CD8-positive, alpha-beta T cell (primary cell): ENCODE measurements at regions of chr12 and their contacts with region 1.

Region 1: DNA sequence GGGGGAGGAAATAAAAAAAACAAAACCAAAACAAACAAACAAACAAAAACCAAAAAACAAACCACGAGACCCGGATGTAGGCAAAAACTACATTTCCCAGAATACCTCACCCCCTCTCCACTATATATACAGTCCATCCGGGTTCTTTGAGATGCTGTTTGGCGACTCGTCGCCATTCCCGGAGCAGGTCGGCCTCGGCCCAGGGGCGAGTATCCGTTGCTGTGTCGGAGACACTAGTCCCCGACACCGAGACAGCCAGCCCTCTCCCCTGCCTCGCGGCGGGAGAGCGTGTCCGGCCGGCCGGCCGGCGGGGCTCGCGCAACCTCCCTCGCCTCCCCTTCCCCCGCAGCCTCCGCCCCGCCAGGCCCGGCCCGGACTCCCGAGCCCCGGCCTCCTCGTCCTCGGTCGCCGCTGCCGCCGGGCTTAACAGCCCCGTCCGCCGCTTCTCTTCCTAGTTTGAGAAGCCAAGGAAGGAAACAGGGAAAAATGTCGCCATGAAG is at the start of gene RNF10:
- DNase-seq: peak; percentile 48 to 92 (median 73)
- ATAC-seq: peak; percentile 69
- H3K4me3 ChIP-seq: peak within 1 kb of the TSS; percentile 89 to 95
- H3K4me3 Mint-ChIP-seq: peak within 1 kb of the TSS; percentile 96
- H3K27ac ChIP-seq: peak within 1 kb of the TSS; percentile 76 to 83
- H3K27ac Mint-ChIP-seq: peak within 1 kb of the TSS; percentile 95
- H3K4me1 ChIP-seq: peaks cover 38% of the 10 kb centered on the region
- H3K4me1 Mint-ChIP-seq: peaks cover 57% of the 10 kb centered on the region
- H3K27me3 ChIP-seq: no peaks in the 10 kb centered on the region
- H3K27me3 Mint-ChIP-seq: no peaks in the 10 kb centered on the region
- CTCF ChIP-seq: no peak
- total RNA-seq, gene RNF10: 402 to 410 TPM

Region 2: GRCh38 chr12:119931402-119931801 is 602.9 kb before region 1 on chr12:
- CTCF ChIA-PET with region 1: no interaction called
- POLR2A ChIA-PET with region 1: no interaction called
- intact Hi-C with region 1: no loop called
- DNase-seq: no peak
- ATAC-seq: no peak
- H3K4me3 ChIP-seq: no peak overlapping the region
- H3K4me3 Mint-ChIP-seq: no peak overlapping the region
- H3K27ac ChIP-seq: no peak overlapping the region
- H3K27ac Mint-ChIP-seq: no peak overlapping the region
- H3K4me1 ChIP-seq: no peaks in the 10 kb centered on the region
- H3K4me1 Mint-ChIP-seq: no peaks in the 10 kb centered on the region
- H3K27me3 ChIP-seq: no peaks in the 10 kb centered on the region
- H3K27me3 Mint-ChIP-seq: peaks cover 7% of the 10 kb centered on the region
- CTCF ChIP-seq: no peak

Region 3: DNA sequence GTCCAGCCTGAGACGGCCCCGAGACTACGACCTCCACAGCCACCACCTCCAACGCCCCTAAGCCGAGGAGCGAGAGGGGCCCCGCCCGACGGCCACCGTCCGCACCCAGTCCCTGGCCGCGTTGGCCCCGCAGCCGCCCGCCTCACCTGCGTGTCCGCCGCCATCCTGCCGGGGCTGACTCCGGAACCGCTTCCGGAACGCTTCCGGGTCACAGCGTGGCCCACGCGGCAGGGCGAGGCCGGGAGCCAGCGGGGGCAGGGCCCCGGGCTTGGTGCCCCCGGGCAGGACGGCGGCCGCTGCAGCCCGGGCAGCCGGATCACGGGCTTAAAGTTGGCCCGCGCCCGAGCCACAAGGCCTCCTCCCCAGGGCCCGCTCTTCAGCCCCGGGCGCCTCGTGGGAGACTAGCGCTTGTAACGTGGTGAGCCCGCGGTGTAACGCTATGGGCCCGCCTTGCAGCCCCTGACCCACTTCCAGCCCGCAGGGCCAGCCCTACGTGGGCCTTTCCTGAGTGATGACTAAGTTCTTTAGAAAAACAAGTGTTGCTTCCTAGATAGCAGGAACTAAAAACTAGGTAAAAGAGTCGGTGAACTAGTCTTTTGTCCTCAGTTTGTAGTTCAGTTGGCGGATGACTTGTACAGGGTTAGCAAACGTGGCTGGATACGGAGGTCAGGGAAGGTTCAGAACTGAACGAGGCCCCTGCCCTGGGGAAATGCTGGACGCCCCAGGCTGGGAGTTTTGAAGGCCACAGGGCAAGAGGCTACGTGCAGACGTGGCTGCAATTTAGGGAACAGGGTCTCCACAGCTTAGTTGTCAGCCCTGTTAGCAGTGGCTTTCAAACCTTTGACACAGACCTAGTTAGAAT is 339.5 kb before region 1 on chr12 and contains the start of gene GCN1:
- CTCF ChIA-PET with region 1: no interaction called
- POLR2A ChIA-PET with region 1: no interaction called
- intact Hi-C with region 1: loop called in 1 of 2 experiments (anchors 10 kb)
- DNase-seq: peak; percentile 76 to 94 (median 88)
- ATAC-seq: peak; percentile 86
- H3K4me3 ChIP-seq: peak within 1 kb of the TSS; percentile 67 to 72
- H3K4me3 Mint-ChIP-seq: peak within 1 kb of the TSS; percentile 82
- H3K27ac ChIP-seq: peak within 1 kb of the TSS; percentile 73 to 88
- H3K27ac Mint-ChIP-seq: peak within 1 kb of the TSS; percentile 95
- H3K4me1 ChIP-seq: peaks cover 36% of the 10 kb centered on the region
- H3K4me1 Mint-ChIP-seq: peaks cover 44% of the 10 kb centered on the region
- H3K27me3 ChIP-seq: no peaks in the 10 kb centered on the region
- H3K27me3 Mint-ChIP-seq: no peaks in the 10 kb centered on the region
- CTCF ChIP-seq: no peak
- total RNA-seq, gene GCN1: 161 to 163 TPM

Region 4: DNA sequence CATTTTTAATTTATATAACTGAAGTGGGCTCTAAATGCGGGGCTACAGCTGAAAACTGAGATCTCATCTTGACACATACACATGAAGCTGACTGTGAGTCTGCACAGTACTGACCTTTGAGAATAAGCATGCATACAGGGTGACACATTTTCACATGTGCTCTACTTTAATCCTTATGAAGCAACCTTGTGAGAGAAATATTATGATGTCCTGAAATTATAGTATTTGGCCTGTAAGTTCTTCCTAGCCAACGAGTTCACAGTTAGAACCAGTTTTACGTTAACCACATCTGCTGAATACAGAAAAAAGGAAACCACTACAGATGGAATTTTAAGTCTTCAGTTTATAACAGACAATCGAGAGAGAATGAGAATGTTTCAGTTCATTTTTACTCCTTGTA is 299.6 kb after region 1 on chr12:
- CTCF ChIA-PET with region 1: no interaction called
- POLR2A ChIA-PET with region 1: no interaction called
- intact Hi-C with region 1: loop called in 1 of 2 experiments (anchors 10 kb)
- DNase-seq: no peak
- ATAC-seq: no peak
- H3K4me3 ChIP-seq: no peak overlapping the region
- H3K4me3 Mint-ChIP-seq: peak overlapping the region; percentile 11
- H3K27ac ChIP-seq: no peak overlapping the region
- H3K27ac Mint-ChIP-seq: peak overlapping the region; percentile 19
- H3K4me1 ChIP-seq: peaks cover 41% of the 10 kb centered on the region
- H3K4me1 Mint-ChIP-seq: peaks cover 73% of the 10 kb centered on the region
- H3K27me3 ChIP-seq: no peaks in the 10 kb centered on the region
- H3K27me3 Mint-ChIP-seq: no peaks in the 10 kb centered on the region
- CTCF ChIP-seq: no peak